ENCODE measurements at regions of chr16 and their contacts with region 1.

Region 1: DNA sequence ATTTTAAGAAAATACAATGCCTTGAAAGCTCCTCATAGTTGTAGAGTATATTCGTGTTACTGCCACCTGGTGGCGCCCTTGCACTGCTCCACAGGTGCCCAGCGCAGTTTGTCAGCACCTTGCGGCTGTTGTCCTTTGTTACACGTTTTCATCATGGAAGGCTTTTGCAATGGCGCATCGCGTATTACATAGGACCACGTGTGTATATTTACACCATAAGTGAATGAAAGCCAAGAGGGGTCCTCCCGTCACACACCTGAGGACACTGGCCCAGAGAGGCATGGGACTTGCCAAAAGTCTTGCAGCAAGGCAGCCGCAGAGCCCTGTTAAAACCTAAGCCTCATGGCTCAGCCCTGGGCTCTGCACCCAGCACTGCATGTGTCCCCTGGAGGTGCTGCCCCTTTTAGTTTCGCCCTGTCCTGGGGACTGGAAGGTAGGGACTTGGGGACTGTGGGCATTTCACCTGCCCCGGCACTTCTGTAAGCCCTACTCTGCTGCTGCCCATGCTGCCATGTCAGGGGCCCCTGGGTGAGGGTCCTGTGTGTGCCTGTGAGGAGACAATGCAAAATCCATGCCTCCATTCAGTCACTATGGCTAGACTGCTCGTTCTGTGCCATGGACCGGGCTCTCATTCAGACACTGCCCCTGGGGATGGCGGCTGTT is 24.3 kb downstream of the POLR3E start:
- DNase-seq: peak; percentile 57
- H3K4me3 Mint-ChIP-seq: no peak overlapping the region
- H3K27ac Mint-ChIP-seq: peak overlapping the region; percentile 48
- H3K4me1 Mint-ChIP-seq: no peaks in the 10 kb centered on the region
- H3K27me3 Mint-ChIP-seq: no peaks in the 10 kb centered on the region

Region 2: DNA sequence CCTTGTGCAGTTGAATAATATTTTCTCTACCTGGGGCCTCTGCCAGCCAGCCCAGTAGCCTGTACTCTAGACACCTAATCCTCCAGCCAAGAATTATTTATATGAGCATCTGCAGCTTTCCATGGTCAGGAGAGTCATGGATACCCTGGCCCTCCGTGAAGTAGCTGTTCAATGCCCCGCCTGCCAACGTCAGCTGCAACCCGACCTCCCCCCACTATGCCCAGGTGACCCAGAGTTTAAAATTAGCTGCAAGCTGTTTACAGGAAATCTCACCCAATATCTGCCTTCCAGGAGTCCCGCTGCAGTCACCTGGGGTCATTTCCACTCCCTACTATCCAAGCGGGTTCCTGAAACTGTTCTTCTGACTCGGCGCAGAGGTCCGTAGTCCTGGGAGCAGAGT is 146.8 kb before region 1 on chr16:
- intact Hi-C with region 1: no loop called
- DNase-seq: no peak
- H3K4me3 Mint-ChIP-seq: no peak overlapping the region
- H3K27ac Mint-ChIP-seq: no peak overlapping the region
- H3K4me1 Mint-ChIP-seq: no peaks in the 10 kb centered on the region
- H3K27me3 Mint-ChIP-seq: peaks cover 4% of the 10 kb centered on the region

Region 3: GRCh38 chr16:22369221-22369811 is 47.8 kb after region 1 on chr16:
- intact Hi-C with region 1: loop called (anchors 1 kb)
- DNase-seq: no peak
- H3K4me3 Mint-ChIP-seq: peak overlapping the region; percentile 15
- H3K27ac Mint-ChIP-seq: peak overlapping the region; percentile 58
- H3K4me1 Mint-ChIP-seq: peaks cover 83% of the 10 kb centered on the region
- H3K27me3 Mint-ChIP-seq: no peaks in the 10 kb centered on the region

Region 4: GRCh38 chr16:22380529-22380928 is 59.1 kb after region 1 on chr16:
- intact Hi-C with region 1: no loop called
- DNase-seq: no peak
- H3K4me3 Mint-ChIP-seq: no peak overlapping the region
- H3K27ac Mint-ChIP-seq: no peak overlapping the region
- H3K4me1 Mint-ChIP-seq: peaks cover 15% of the 10 kb centered on the region
- H3K27me3 Mint-ChIP-seq: peaks cover 2% of the 10 kb centered on the region

Region 5: DNA sequence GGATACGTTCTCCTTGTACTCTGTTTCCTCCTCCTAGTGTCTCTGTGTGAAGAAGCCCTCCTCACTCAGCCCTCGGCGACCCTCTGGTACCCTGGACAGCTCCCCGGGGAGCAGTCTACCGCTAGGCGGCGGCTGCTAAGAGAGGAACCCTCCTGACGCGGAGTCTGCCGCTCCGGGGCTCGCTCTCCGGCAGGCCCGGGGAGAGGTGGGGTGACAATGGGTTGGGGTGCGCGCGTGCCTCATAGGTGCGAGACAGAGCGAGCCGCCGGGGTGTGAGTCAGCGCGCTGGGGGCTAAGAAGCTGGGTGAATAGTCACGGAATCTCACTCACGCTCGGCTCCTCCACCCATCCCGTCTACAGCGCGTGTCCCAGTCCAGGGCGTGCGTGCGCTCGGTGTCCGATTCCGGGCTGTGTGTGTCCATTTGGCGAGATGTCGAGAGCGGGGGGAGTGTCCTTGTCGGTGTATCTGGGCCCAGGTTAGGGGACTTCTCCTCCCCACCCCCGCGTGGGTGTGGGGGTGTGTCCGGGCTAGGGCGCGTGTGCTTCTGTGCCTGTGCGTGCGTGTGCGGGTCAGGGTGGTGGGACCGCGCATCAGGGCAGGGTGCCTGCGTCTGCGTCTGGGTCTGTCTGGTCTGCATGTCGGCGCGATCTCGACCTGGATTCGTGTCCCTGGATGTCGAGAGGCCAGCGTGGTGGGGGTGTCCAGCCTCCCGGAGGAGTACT is 491.9 kb after region 1 on chr16:
- intact Hi-C with region 1: no loop called
- DNase-seq: no peak
- H3K4me3 Mint-ChIP-seq: no peak overlapping the region
- H3K27ac Mint-ChIP-seq: no peak overlapping the region
- H3K4me1 Mint-ChIP-seq: no peaks in the 10 kb centered on the region
- H3K27me3 Mint-ChIP-seq: peaks cover 44% of the 10 kb centered on the region

Measured in activated T-helper 1 cell treated with anti-CD3 and anti-CD28 coated beads, Interleukin-12 subunit alpha, Interleukin-12 subunit beta, Interleukin-2, Interleukin-4 antibody, amounts not matched to agents 30 ng/mL and 10 ng/mL and 1 ng/mL, durations not matched to agents 14 hours and 24 hours and 36 hours (primary cell).